Caco-2 (cell line): ENCODE measurements at regions of chr11 and their contacts with region 1.

Region 1: GRCh38 chr11:7332962-7333361 is 81.3 kb downstream of the SYT9 start:
- DNase-seq: no peak
- H3K4me3 ChIP-seq: no peak overlapping the region
- H3K4me3 Mint-ChIP-seq: no peak overlapping the region
- H3K27ac Mint-ChIP-seq: no peak overlapping the region
- H3K4me1 ChIP-seq: no peaks in the 10 kb centered on the region
- H3K4me1 Mint-ChIP-seq: no peaks in the 10 kb centered on the region
- H3K27me3 ChIP-seq: no peaks in the 10 kb centered on the region
- H3K27me3 Mint-ChIP-seq: peaks cover 6% of the 10 kb centered on the region
- CTCF ChIP-seq: no peak

Region 2: GRCh38 chr11:7381937-7382336 is 49.0 kb after region 1 on chr11:
- CTCF ChIA-PET with region 1: no interaction called
- POLR2A ChIA-PET with region 1: no interaction called
- intact Hi-C with region 1: loop called (anchors 5 kb)
- DNase-seq: no peak
- H3K4me3 ChIP-seq: no peak overlapping the region
- H3K4me3 Mint-ChIP-seq: no peak overlapping the region
- H3K27ac Mint-ChIP-seq: no peak overlapping the region
- H3K4me1 ChIP-seq: no peaks in the 10 kb centered on the region
- H3K4me1 Mint-ChIP-seq: no peaks in the 10 kb centered on the region
- H3K27me3 ChIP-seq: no peaks in the 10 kb centered on the region
- H3K27me3 Mint-ChIP-seq: peaks cover 22% of the 10 kb centered on the region
- CTCF ChIP-seq: no peak